Ovary (tissue), 10 donors: ENCODE measurements at regions of chr12 and their contacts with region 1.

Region 1: GRCh38 chr12:57069523-57069922 is 9.1 kb downstream of the NEMP1 start:
- DNase-seq: peak in 4 of 5 donors; percentile 55 to 79 (median 58)
- H3K4me3 ChIP-seq: no peak overlapping the region
- H3K27ac ChIP-seq: peak overlapping the region; percentile 56 to 76
- H3K4me1 ChIP-seq: peaks cover 1% of the 10 kb centered on the region
- H3K27me3 ChIP-seq: no peaks in the 10 kb centered on the region
- CTCF ChIP-seq: peak; percentile 78 to 97 (median 96)
- EP300 ChIP-seq: no peak
- POLR2A ChIP-seq: no peak

Region 2: GRCh38 chr12:57175428-57176138 is 106.1 kb after region 1 on chr12:
- intact Hi-C with region 1: loop called in 2 of 4 experiments (anchors 5 kb)
- DNase-seq: peak; percentile 83 to 92 (median 90)
- H3K4me3 ChIP-seq: no peak overlapping the region
- H3K27ac ChIP-seq: peak overlapping the region in 1 of 2 donors; percentile 43
- H3K4me1 ChIP-seq: peaks cover 5% of the 10 kb centered on the region
- H3K27me3 ChIP-seq: no peaks in the 10 kb centered on the region
- CTCF ChIP-seq: peak; percentile 72 to 90 (median 87)
- EP300 ChIP-seq: no peak
- POLR2A ChIP-seq: no peak

Region 3: GRCh38 chr12:57182921-57183790 is 113.6 kb after region 1 on chr12:
- intact Hi-C with region 1: loop called in 3 of 4 experiments (anchors 5 kb)
- DNase-seq: peak; percentile 67 to 87 (median 83)
- H3K4me3 ChIP-seq: no peak overlapping the region
- H3K27ac ChIP-seq: no peak overlapping the region
- H3K4me1 ChIP-seq: no peaks in the 10 kb centered on the region
- H3K27me3 ChIP-seq: no peaks in the 10 kb centered on the region
- CTCF ChIP-seq: peak; percentile 58 to 92 (median 91)
- EP300 ChIP-seq: no peak
- POLR2A ChIP-seq: peak; percentile 13

Region 4: DNA sequence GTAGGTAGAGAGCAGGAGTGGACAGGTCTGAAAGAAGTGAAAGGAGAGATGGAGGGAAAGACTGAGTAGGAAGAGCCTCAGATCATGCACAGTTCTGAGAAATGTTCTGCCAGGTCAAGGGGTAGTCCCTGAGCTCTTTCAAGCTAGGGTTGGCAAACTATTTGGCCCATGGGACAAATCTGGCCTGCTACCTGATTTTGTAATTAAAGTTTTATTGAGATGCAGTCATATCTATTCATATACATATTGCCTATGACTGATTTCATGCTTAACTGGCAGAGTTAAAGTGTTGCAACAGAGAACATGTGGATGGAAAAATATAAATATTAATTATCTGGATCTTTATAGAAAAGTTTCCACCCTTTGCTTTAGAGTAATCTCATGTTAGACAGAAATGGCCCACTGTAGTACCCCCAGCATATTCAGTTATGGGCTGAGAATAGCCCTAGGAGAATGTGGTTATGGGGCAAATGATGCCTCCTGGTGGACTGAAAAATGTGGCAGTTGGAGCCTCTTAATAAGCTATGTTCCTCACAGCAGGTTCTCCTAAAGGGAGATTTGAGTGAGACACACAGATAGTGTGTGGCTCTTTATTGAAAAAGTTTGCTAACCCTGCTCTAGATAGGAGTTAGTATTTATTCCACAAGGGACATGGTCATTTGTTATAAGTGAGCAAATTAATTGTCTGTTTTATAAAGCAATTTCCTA is 1373.9 kb after region 1 on chr12:
- intact Hi-C with region 1: no loop called
- DNase-seq: no peak
- H3K4me3 ChIP-seq: no peak overlapping the region
- H3K27ac ChIP-seq: no peak overlapping the region
- H3K4me1 ChIP-seq: no peaks in the 10 kb centered on the region
- H3K27me3 ChIP-seq: no peaks in the 10 kb centered on the region
- CTCF ChIP-seq: no peak
- EP300 ChIP-seq: no peak
- POLR2A ChIP-seq: no peak